Vagina (tissue), 2 donors: ENCODE measurements at regions of chr6 and their contacts with region 1.

Region 1: GRCh38 chr6:141290941-141291721 is 841.6 kb upstream of the GJE1 start:
- DNase-seq: no peak
- H3K4me3 ChIP-seq: no peak overlapping the region
- H3K27ac ChIP-seq: no peak overlapping the region
- H3K4me1 ChIP-seq: no peaks in the 10 kb centered on the region
- H3K27me3 ChIP-seq: no peaks in the 10 kb centered on the region
- CTCF ChIP-seq: no peak
- POLR2A ChIP-seq: no peak

Region 2: GRCh38 chr6:140893432-140893831 is 397.7 kb before region 1 on chr6:
- intact Hi-C with region 1: no loop called
- DNase-seq: no peak
- H3K4me3 ChIP-seq: no peak overlapping the region
- H3K27ac ChIP-seq: no peak overlapping the region
- H3K4me1 ChIP-seq: no peaks in the 10 kb centered on the region
- H3K27me3 ChIP-seq: no peaks in the 10 kb centered on the region
- CTCF ChIP-seq: no peak
- POLR2A ChIP-seq: no peak

Region 3: DNA sequence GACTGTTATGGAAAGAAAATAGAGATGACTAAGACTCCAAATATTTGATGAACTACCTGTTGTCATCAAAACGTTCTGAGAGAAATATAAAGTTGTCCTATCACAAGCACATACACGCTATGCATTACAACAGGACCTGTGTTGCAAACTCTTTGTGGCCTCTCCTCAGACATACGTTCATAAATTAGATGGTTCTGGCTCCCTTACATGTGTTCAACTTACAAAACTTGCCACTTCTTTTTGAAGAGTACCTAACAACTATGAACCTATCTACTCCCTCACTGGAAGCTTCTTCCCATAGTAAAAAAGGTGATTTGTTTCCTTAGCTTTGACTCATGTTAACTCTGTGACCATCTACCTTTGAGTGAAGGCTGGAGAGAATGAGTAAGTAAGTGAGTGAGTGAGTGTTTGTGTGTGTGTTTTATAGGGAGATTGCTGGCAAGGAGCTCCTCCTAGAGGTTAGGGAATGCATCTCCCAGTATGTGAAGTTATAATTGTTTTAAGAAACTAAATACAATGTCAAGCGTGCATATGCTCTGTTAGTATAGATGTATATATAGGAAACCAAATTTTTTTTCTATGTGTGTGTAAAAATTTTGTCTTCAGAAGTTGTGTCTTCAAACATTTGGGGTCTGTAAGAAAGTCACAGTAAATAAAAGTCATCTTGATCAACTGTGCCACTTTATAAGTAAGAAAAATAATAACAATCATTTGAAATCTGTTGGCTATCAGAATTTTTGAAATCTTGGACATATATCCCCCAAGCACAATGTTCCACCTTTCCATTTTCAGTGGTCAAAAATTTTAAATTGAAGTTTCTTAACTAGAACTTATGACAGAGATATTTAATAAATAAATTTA is 369.5 kb before region 1 on chr6:
- intact Hi-C with region 1: no loop called
- DNase-seq: no peak
- H3K4me3 ChIP-seq: no peak overlapping the region
- H3K27ac ChIP-seq: no peak overlapping the region
- H3K4me1 ChIP-seq: no peaks in the 10 kb centered on the region
- H3K27me3 ChIP-seq: no peaks in the 10 kb centered on the region
- CTCF ChIP-seq: peak in 2 of 3 experiments; percentile 39 to 48
- POLR2A ChIP-seq: no peak

Region 4: DNA sequence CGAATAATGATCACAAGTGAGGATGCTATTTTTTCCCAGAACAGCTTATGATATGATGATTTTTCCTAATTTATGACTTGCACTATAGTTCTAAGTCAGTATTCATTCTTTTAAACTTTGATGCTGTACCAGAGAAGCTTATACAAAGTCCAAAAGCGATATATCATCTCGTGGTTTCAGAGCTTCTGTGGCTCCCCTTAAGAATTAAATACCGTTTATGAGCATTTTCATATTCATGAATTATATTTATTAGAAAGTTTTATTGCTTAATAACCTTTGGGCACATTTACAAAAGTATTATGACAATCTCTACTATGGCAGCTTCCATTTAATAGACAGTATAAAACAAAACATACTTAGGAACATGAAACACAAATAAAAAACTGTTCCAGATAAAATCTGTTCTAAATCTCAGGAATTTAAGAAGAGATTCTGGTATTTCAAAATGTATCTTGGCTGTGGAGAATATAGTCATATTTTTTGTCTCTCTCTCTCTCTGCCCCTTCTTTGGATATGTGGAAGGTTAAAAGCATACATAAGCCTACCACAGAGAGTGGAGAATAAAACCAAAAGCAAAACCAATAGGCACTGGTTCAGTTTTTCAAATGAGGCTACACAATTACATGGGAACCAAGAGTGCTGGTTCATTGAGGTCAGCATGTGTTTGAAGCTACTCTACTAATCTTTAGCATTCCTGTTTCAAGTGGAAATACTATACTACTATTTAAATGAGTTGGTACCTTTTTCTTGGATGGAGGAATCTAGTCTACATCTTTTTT is 42.9 kb before region 1 on chr6:
- intact Hi-C with region 1: no loop called
- DNase-seq: no peak
- H3K4me3 ChIP-seq: no peak overlapping the region
- H3K27ac ChIP-seq: no peak overlapping the region
- H3K4me1 ChIP-seq: no peaks in the 10 kb centered on the region
- H3K27me3 ChIP-seq: no peaks in the 10 kb centered on the region
- CTCF ChIP-seq: no peak
- POLR2A ChIP-seq: no peak

Region 5: DNA sequence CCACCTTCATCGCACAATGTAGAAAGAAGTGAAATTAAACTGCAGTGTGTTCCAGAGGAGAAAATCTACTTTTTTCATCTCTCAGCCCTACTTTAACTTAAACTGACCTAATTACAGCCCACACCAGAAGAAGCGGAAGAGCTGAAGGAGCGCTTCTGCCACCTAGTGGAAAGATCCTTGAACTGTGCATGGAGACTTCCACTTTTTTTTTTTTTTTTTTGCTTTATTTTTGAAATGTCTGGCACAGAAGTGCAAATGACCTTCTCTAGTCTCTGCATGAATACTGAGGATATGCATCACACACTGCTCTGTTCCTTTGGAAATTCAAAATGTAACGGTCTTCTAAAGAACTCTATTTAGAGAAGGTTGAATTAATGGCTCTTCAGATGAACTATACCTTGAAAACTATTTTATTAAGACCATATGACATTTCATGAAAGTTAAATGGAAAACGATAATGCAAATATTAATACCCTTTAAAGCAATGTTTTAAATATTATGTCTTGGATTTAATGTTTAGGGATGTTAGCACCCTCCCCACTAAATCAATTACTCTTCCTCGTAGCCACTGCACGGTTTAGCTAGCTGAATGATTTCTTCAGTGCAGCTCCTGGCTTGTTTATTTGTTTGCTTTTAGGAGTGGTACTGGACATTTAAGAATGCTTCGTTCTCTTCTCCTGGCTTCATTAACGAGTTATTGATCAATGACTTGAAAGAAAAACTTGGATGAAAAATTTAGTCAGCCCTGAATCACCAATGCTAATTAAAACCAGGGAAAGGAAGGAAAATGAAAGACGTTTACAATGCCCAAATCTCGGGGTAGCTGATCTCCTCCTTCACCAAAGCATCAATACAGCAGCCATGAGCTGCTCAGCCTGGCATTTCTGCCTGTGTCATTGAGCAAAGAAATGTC is 272.0 kb after region 1 on chr6:
- intact Hi-C with region 1: no loop called
- DNase-seq: no peak
- H3K4me3 ChIP-seq: peak overlapping the region; percentile 9 to 21
- H3K27ac ChIP-seq: peak overlapping the region; percentile 16
- H3K4me1 ChIP-seq: no peaks in the 10 kb centered on the region
- H3K27me3 ChIP-seq: no peaks in the 10 kb centered on the region
- CTCF ChIP-seq: peak; percentile 25 to 76 (median 50)
- POLR2A ChIP-seq: no peak

Region 6: DNA sequence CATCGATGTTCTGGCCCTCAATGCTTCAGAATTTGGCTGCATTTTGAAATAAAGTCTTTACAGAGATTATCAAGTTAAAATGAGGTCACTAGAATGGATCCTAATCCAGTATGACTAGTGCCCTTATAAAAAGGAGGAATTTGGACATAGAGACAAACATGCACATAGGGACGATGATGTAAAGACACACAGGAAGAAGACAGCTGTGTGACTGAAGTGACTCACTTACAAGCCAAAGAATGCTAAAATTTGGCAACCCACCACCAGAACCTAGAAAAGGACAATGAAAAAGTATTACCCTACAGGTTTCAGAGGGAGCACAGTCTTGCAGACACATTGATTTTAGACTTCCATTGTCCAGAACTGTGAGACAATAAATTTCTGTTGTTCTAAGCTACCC is 518.8 kb after region 1 on chr6:
- intact Hi-C with region 1: loop called (anchors 10 kb)
- DNase-seq: no peak
- H3K4me3 ChIP-seq: no peak overlapping the region
- H3K27ac ChIP-seq: no peak overlapping the region
- H3K4me1 ChIP-seq: no peaks in the 10 kb centered on the region
- H3K27me3 ChIP-seq: no peaks in the 10 kb centered on the region
- CTCF ChIP-seq: no peak
- POLR2A ChIP-seq: no peak